Right cardiac atrium (tissue), 5 donors: ENCODE measurements at regions of chr9 and their contacts with region 1.

Region 1: GRCh38 chr9:125255781-125256391 is 5.7 kb upstream of the GAPVD1 start:
- DNase-seq: no peak
- ATAC-seq: peak in 1 of 2 donors; percentile 36
- H3K4me3 ChIP-seq: no peak overlapping the region
- H3K27ac ChIP-seq: no peak overlapping the region
- H3K4me1 ChIP-seq: no peaks in the 10 kb centered on the region
- H3K27me3 ChIP-seq: no peaks in the 10 kb centered on the region

Region 2: GRCh38 chr9:125374443-125375309 is 118.8 kb after region 1 on chr9:
- intact Hi-C with region 1: loop called in 2 of 4 experiments (anchors 5 to 10 kb)
- DNase-seq: peak; percentile 58 to 86 (median 83)
- ATAC-seq: peak; percentile 88 to 91
- H3K4me3 ChIP-seq: no peak overlapping the region
- H3K27ac ChIP-seq: no peak overlapping the region
- H3K4me1 ChIP-seq: no peaks in the 10 kb centered on the region
- H3K27me3 ChIP-seq: no peaks in the 10 kb centered on the region

Region 3: GRCh38 chr9:125407974-125408900 is 152.4 kb after region 1 on chr9:
- intact Hi-C with region 1: no loop called
- DNase-seq: peak; percentile 79 to 93 (median 92)
- ATAC-seq: peak; percentile 90 to 92
- H3K4me3 ChIP-seq: peak overlapping the region; percentile 54
- H3K27ac ChIP-seq: no peak overlapping the region
- H3K4me1 ChIP-seq: no peaks in the 10 kb centered on the region
- H3K27me3 ChIP-seq: no peaks in the 10 kb centered on the region